Thyroid gland (tissue), 4 donors: ENCODE measurements at regions of chr19 and their contacts with region 1.

Region 1: GRCh38 chr19:28878862-28879566 is 333.9 kb downstream of the UQCRFS1 start:
- DNase-seq: peak; percentile 69 to 77
- H3K4me3 ChIP-seq: no peak overlapping the region
- H3K27ac ChIP-seq: no peak overlapping the region
- H3K4me1 ChIP-seq: peaks cover 6 to 18% of the 10 kb centered on the region in 2 donors
- H3K27me3 ChIP-seq: no peaks in the 10 kb centered on the region
- CTCF ChIP-seq: peak; percentile 38 to 75 (median 61)
- POLR2A ChIP-seq: no peak

Region 2: DNA sequence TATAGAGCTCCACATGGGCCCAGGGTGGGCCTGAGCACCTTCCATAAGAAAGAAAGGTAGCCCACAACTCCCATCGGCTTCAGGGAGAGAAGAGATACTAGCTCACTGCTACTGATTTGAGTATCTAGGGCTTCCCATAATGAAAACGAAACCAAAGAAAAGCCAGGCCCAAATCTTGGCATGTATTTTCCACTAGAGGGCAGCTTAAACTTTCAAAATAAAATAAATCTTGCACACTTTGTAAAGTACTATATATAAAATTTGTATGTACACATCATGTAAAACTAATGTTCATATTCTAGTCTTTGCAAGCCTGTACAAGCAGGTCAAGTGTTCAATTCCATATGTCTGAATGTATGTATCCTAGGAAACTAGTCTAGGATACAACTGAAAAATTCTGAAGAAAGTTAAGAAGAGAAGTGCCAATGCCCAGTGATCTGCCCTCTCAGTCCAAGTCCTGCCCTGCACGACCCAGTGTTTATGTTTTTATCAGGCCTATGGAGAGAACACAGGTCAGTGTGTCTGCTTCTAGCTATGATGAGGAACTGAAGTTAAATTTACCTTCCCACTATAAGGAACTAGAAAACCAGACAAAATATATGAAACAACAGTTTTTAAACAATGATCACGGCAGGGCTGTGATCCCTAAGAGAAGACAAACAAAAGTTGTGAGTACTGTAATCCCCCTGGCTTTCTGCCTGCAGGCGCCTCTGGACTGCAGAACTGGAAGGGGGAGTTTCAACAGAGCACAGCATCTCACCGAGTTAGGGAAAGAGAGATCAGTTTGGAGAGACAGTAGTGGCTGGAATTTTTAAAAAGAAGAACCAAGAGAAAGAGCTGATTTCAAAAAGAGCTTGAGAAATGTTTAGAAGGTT is 141.8 kb before region 1 on chr19:
- intact Hi-C with region 1: loop called (anchors 5 kb)
- DNase-seq: peak; percentile 57 to 65
- H3K4me3 ChIP-seq: no peak overlapping the region
- H3K27ac ChIP-seq: no peak overlapping the region
- H3K4me1 ChIP-seq: peaks cover 0 to 7% of the 10 kb centered on the region in 2 donors
- H3K27me3 ChIP-seq: no peaks in the 10 kb centered on the region
- CTCF ChIP-seq: peak in 5 of 6 experiments; percentile 18 to 73 (median 64)
- POLR2A ChIP-seq: no peak